HAP-1 (cell line): ENCODE measurements at regions of chr18 and their contacts with region 1.

Region 1: GRCh38 chr18:21914739-21915319 is 174.2 kb downstream of the MIB1 start:
- DNase-seq: peak; percentile 43 to 65
- H3K4me3 ChIP-seq: no peak overlapping the region
- H3K4me1 ChIP-seq: no peaks in the 10 kb centered on the region
- H3K27me3 ChIP-seq: peaks cover 22% of the 10 kb centered on the region

Region 2: GRCh38 chr18:21406111-21406510 is 508.7 kb before region 1 on chr18:
- in situ Hi-C with region 1: no loop called
- DNase-seq: no peak
- H3K4me3 ChIP-seq: no peak overlapping the region
- H3K4me1 ChIP-seq: 0 out of 2 replicates have a peak, but pooled peaks cover 3% of the 10 kb centered on the region
- H3K27me3 ChIP-seq: no peaks in the 10 kb centered on the region

Region 3: GRCh38 chr18:21725201-21725600 is 189.6 kb before region 1 on chr18:
- in situ Hi-C with region 1: no loop called
- DNase-seq: no peak
- H3K4me3 ChIP-seq: no peak overlapping the region
- H3K4me1 ChIP-seq: no peaks in the 10 kb centered on the region
- H3K27me3 ChIP-seq: no peaks in the 10 kb centered on the region

Region 4: DNA sequence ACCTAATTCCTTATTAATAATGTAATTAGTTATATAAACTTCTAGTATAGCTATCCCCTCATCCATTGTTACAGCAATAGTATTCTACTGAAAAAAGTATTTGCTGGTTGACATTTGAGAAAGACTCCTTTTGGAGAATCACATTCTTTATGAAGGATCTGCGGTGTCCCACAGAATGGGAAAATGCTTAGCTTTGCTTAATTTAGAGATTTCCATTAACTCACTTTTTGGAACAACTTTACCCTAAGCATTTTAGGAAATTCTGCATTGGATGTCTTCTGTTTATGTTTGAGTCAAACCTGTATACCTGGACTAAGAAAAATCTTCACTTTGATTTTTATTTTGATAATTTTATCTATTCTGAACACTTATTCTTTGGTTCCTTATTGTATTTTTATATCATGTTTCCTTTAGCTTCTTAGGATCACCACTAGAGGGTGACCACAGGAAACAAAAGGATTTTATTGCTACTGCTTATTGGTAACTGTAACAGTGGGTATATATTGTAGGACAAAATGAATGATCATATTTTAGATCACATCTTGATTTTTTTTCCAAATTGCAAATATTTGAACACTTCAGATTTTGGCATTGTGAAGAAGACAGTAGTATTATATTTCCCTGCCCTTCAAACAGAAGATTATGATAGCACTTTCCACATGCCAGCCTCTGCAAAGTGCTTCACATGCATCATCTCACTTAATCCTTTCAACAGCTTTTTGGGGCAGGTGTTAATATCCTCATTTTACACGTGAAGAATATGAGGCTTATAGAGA is 94.6 kb before region 1 on chr18:
- in situ Hi-C with region 1: no loop called
- DNase-seq: peak in 1 of 2 experiments; percentile 15
- H3K4me3 ChIP-seq: no peak overlapping the region
- H3K4me1 ChIP-seq: no peaks in the 10 kb centered on the region
- H3K27me3 ChIP-seq: no peaks in the 10 kb centered on the region

Region 5: DNA sequence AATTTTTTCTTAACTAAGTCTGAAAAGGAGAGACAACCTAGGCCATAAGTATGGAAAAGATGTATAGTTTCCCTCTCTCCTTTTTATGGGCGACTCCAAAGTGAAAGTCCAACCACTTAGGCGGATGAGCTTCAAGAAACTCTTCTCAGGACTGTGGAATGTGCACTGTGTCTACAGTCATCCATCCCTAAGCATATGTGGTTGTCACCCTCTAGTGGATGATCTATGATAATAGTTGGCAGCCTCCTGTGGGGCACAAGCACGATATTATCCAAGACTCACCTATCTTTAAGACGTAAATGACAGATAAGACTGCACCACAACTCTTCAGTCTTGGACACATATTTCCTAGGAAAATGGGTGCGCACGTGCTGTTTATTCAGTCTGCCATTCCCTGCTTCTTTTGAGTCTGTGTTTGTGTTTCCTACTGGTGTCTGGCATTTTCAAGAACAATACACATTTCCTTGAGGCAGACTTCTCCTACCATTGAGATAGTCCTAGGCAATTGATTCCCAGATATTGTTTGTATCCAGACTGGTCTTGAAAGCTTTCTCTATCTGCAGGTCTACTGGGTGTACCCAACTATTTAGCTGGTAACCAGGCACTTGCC is 648.4 kb after region 1 on chr18:
- in situ Hi-C with region 1: loop called (anchors 25 kb)
- DNase-seq: peak; percentile 43 to 63
- H3K4me3 ChIP-seq: no peak overlapping the region
- H3K4me1 ChIP-seq: no peaks in the 10 kb centered on the region
- H3K27me3 ChIP-seq: peaks cover 38% of the 10 kb centered on the region